Activated CD4-positive, alpha-beta memory T cell treated with anti-CD3 and anti-CD28 coated beads, Interleukin-2, amount 10 ng/mL, durations not matched to agents 7 days and 5 days (primary cell): ENCODE measurements at regions of chr14 and their contacts with region 1.

Region 1: GRCh38 chr14:24114536-24115450 is at the starts of genes DCAF11 and NRL:
- DNase-seq: peak; percentile 98
- H3K4me3 Mint-ChIP-seq: peak within 1 kb of the TSS; percentile 98
- H3K27ac Mint-ChIP-seq: peak within 1 kb of the TSS; percentile 100
- H3K4me1 Mint-ChIP-seq: peaks cover 42% of the 10 kb centered on the region
- H3K27me3 Mint-ChIP-seq: no peaks in the 10 kb centered on the region
- total RNA-seq, gene DCAF11: 94.1 to 98.2 TPM
- total RNA-seq, gene NRL: 2.1 to 2.4 TPM

Region 2: GRCh38 chr14:23544511-23545447 is 570.0 kb before region 1 on chr14:
- CTCF ChIA-PET with region 1: no interaction called
- POLR2A ChIA-PET with region 1: no interaction called
- DNase-seq: no peak
- H3K4me3 Mint-ChIP-seq: no peak overlapping the region
- H3K27ac Mint-ChIP-seq: no peak overlapping the region
- H3K4me1 Mint-ChIP-seq: no peaks in the 10 kb centered on the region
- H3K27me3 Mint-ChIP-seq: no peaks in the 10 kb centered on the region

Region 3: GRCh38 chr14:23910101-23910875 is 204.5 kb before region 1 on chr14:
- CTCF ChIA-PET with region 1: no interaction called
- POLR2A ChIA-PET with region 1: no interaction called
- DNase-seq: no peak
- H3K4me3 Mint-ChIP-seq: no peak overlapping the region
- H3K27ac Mint-ChIP-seq: no peak overlapping the region
- H3K4me1 Mint-ChIP-seq: no peaks in the 10 kb centered on the region
- H3K27me3 Mint-ChIP-seq: peaks cover 20% of the 10 kb centered on the region

Region 4: DNA sequence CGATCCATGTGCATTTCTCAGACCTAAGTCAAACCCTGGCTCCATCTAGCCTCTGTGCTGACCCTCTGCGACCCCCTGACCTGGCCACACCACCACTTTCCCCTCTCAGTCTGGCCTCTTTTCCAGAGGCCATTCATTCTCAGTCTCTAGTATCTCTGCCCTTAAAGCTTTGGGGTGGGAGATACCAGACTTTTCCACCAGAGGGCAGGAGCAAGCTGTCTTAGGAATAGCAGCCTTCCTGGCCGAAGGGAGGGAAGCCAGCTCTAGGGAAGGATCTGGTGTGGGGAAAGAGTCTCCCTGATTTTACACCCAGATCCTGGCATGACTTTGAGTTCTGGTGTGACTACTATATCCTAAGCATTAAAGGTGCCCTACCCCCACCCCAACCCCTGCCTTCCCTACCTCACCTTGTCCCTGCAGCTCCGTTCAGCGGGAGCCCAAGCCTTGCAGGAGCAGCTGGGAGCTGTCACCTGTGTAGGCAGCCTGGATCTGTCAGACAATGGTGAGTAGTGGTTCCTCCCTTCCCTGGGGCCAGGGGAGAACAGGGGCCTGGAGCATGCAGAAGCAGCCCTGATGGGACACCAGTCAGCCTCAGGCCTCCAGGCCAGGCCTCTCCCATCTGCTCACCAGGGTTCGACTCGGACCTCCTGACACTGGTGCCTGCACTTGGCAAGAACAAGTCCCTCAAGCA is 56.4 kb before region 1 on chr14:
- CTCF ChIA-PET with region 1: interaction called, 164 read pairs
- POLR2A ChIA-PET with region 1: interaction called, 34 read pairs
- DNase-seq: peak; percentile 76
- H3K4me3 Mint-ChIP-seq: no peak overlapping the region
- H3K27ac Mint-ChIP-seq: peak overlapping the region; percentile 38
- H3K4me1 Mint-ChIP-seq: peaks cover 9% of the 10 kb centered on the region
- H3K27me3 Mint-ChIP-seq: peaks cover 8% of the 10 kb centered on the region

Region 5: GRCh38 chr14:24068711-24069410 is 45.9 kb before region 1 on chr14:
- CTCF ChIA-PET with region 1: no interaction called
- POLR2A ChIA-PET with region 1: no interaction called
- DNase-seq: no peak
- H3K4me3 Mint-ChIP-seq: no peak overlapping the region
- H3K27ac Mint-ChIP-seq: no peak overlapping the region
- H3K4me1 Mint-ChIP-seq: no peaks in the 10 kb centered on the region
- H3K27me3 Mint-ChIP-seq: peaks cover 14% of the 10 kb centered on the region

Region 6: DNA sequence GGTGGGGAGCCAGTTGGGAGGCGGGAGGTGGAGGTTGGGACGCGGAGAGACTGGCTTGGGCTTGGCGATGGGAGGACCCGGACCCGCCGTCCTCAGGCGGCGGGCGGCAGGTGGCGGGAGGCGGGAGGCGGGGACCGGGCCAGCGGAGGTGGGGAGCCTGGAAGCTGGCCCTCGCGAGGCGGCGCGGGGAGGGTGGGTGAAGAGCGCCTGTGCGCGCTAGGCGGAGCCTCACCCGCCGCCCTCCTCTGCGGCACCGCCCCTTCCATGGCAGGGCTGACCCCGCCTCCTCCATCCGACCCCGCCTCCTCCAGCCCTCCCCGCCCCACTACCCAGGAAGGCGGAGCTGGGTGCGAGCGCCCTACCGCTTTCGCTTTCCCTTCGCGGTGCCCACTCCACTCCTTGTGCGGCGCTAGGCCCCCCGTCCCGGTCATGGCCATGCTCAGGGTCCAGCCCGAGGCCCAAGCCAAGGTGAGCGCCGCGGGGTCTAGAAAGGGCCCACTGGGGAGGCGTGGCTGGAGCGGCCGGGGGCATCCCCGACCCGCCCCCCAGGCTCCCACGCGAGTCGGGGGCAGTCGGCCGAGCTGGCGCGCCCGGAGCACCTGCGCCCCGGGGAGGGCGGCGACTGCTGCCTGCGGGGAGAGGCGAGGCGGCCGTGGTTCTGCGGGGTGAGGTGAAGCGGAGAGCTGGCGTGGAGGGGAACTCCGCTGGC is 21.2 kb after region 1 on chr14 and contains the start of gene PSME1:
- CTCF ChIA-PET with region 1: interaction called, 24 read pairs
- POLR2A ChIA-PET with region 1: interaction called, 448 read pairs
- DNase-seq: peak; percentile 96
- H3K4me3 Mint-ChIP-seq: peak within 1 kb of the TSS; percentile 93
- H3K27ac Mint-ChIP-seq: peak within 1 kb of the TSS; percentile 89
- H3K4me1 Mint-ChIP-seq: peaks cover 53% of the 10 kb centered on the region
- H3K27me3 Mint-ChIP-seq: no peaks in the 10 kb centered on the region
- total RNA-seq, gene PSME1: 391 to 397 TPM

Region 7: GRCh38 chr14:24188251-24189058 is 73.7 kb after region 1 on chr14 and contains the start of gene IPO4:
- CTCF ChIA-PET with region 1: no interaction called
- POLR2A ChIA-PET with region 1: interaction called, 25 read pairs
- DNase-seq: peak; percentile 96
- H3K4me3 Mint-ChIP-seq: peak within 1 kb of the TSS; percentile 81
- H3K27ac Mint-ChIP-seq: peak within 1 kb of the TSS; percentile 79
- H3K4me1 Mint-ChIP-seq: peaks cover 59% of the 10 kb centered on the region
- H3K27me3 Mint-ChIP-seq: no peaks in the 10 kb centered on the region
- total RNA-seq, gene IPO4: 24.0 to 26.2 TPM

Region 8: GRCh38 chr14:24271134-24271833 is 156.5 kb after region 1 on chr14 and contains the start of gene RABGGTA:
- CTCF ChIA-PET with region 1: no interaction called
- POLR2A ChIA-PET with region 1: interaction called, 12 read pairs
- DNase-seq: peak; percentile 90
- H3K4me3 Mint-ChIP-seq: peak within 1 kb of the TSS; percentile 86
- H3K27ac Mint-ChIP-seq: peak within 1 kb of the TSS; percentile 92
- H3K4me1 Mint-ChIP-seq: peaks cover 43% of the 10 kb centered on the region
- H3K27me3 Mint-ChIP-seq: no peaks in the 10 kb centered on the region
- total RNA-seq, gene RABGGTA: 40.2 to 41.0 TPM

Region 9: GRCh38 chr14:24774187-24774915 is 659.6 kb after region 1 on chr14:
- CTCF ChIA-PET with region 1: no interaction called
- POLR2A ChIA-PET with region 1: no interaction called
- DNase-seq: no peak
- H3K4me3 Mint-ChIP-seq: no peak overlapping the region
- H3K27ac Mint-ChIP-seq: no peak overlapping the region
- H3K4me1 Mint-ChIP-seq: no peaks in the 10 kb centered on the region
- H3K27me3 Mint-ChIP-seq: peaks cover 25% of the 10 kb centered on the region